Activated naive CD4-positive, alpha-beta T cell treated with anti-CD3 and anti-CD28 coated beads for 36 hours (primary cell): ENCODE measurements at regions of chr6 and their contacts with region 1.

Region 1: GRCh38 chr6:142474531-142475289 is 172.9 kb downstream of the ADGRG6 start:
- DNase-seq: peak; percentile 10
- H3K4me3 Mint-ChIP-seq: no peak overlapping the region
- H3K27ac Mint-ChIP-seq: no peak overlapping the region
- H3K4me1 Mint-ChIP-seq: peaks cover 11% of the 10 kb centered on the region
- H3K27me3 Mint-ChIP-seq: no peaks in the 10 kb centered on the region

Region 2: DNA sequence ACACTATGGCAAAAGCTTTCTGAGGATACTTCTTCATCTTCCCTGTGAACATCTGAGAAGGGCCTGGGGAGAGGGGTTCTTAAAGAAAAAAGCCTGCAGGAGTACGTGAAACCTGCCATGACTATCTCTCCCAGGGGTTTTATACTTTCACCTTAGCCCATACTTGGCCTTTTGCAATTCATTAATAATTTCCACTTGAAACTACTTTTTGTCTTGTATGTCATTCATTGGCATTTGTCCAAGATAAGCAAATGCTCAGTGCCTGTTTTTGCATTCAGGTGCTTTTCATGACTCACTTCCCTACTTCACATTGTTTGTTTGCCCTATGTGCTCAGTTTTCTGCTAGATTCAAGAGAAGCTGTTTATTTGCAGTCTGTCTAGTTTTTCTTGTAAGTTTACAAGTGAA is 922.2 kb before region 1 on chr6:
- CTCF ChIA-PET with region 1: no interaction called
- intact Hi-C with region 1: no loop called
- DNase-seq: no peak
- H3K4me3 Mint-ChIP-seq: no peak overlapping the region
- H3K27ac Mint-ChIP-seq: no peak overlapping the region
- H3K4me1 Mint-ChIP-seq: peaks cover 6% of the 10 kb centered on the region
- H3K27me3 Mint-ChIP-seq: no peaks in the 10 kb centered on the region

Region 3: GRCh38 chr6:142537612-142538478 is 63.1 kb after region 1 on chr6:
- CTCF ChIA-PET with region 1: interaction called, 28 read pairs
- intact Hi-C with region 1: loop called (anchors 1 kb)
- DNase-seq: peak; percentile 55
- H3K4me3 Mint-ChIP-seq: no peak overlapping the region
- H3K27ac Mint-ChIP-seq: no peak overlapping the region
- H3K4me1 Mint-ChIP-seq: peaks cover 5% of the 10 kb centered on the region
- H3K27me3 Mint-ChIP-seq: no peaks in the 10 kb centered on the region

Region 4: GRCh38 chr6:142952614-142953013 is 477.9 kb after region 1 on chr6:
- CTCF ChIA-PET with region 1: no interaction called
- intact Hi-C with region 1: loop called (anchors 5 kb)
- DNase-seq: peak; percentile 42
- H3K4me3 Mint-ChIP-seq: no peak overlapping the region
- H3K27ac Mint-ChIP-seq: peak overlapping the region; percentile 20
- H3K4me1 Mint-ChIP-seq: peaks cover 25% of the 10 kb centered on the region
- H3K27me3 Mint-ChIP-seq: no peaks in the 10 kb centered on the region

Region 5: GRCh38 chr6:143279385-143279784 is 804.7 kb after region 1 on chr6:
- CTCF ChIA-PET with region 1: interaction called, 4 read pairs
- intact Hi-C with region 1: loop called (anchors 5 kb)
- DNase-seq: peak; percentile 19
- H3K4me3 Mint-ChIP-seq: no peak overlapping the region
- H3K27ac Mint-ChIP-seq: no peak overlapping the region
- H3K4me1 Mint-ChIP-seq: peaks cover 1% of the 10 kb centered on the region
- H3K27me3 Mint-ChIP-seq: no peaks in the 10 kb centered on the region

Region 6: GRCh38 chr6:143501851-143502250 is 1027.1 kb after region 1 on chr6:
- CTCF ChIA-PET with region 1: no interaction called
- intact Hi-C with region 1: loop called (anchors 5 kb)
- DNase-seq: no peak
- H3K4me3 Mint-ChIP-seq: no peak overlapping the region
- H3K27ac Mint-ChIP-seq: no peak overlapping the region
- H3K4me1 Mint-ChIP-seq: peaks cover 19% of the 10 kb centered on the region
- H3K27me3 Mint-ChIP-seq: no peaks in the 10 kb centered on the region